Activated T-helper 2 cell treated with anti-CD3 and anti-CD28 coated beads, Interferon-gamma antibody, Interleukin-2, Interleukin-4, amounts not matched to agents 10 μg/mL and 5 μg/mL and 100 μg/mL, durations not matched to agents 14 hours and 24 hours and 36 hours (primary cell): ENCODE measurements at regions of chr14 and their contacts with region 1.

Region 1: GRCh38 chr14:65206448-65207096 is 104.3 kb upstream of the MAX start:
- DNase-seq: no peak
- H3K4me3 Mint-ChIP-seq: peak overlapping the region; percentile 64
- H3K27ac Mint-ChIP-seq: peak overlapping the region; percentile 91
- H3K4me1 Mint-ChIP-seq: peaks cover 61% of the 10 kb centered on the region
- H3K27me3 Mint-ChIP-seq: no peaks in the 10 kb centered on the region

Region 2: DNA sequence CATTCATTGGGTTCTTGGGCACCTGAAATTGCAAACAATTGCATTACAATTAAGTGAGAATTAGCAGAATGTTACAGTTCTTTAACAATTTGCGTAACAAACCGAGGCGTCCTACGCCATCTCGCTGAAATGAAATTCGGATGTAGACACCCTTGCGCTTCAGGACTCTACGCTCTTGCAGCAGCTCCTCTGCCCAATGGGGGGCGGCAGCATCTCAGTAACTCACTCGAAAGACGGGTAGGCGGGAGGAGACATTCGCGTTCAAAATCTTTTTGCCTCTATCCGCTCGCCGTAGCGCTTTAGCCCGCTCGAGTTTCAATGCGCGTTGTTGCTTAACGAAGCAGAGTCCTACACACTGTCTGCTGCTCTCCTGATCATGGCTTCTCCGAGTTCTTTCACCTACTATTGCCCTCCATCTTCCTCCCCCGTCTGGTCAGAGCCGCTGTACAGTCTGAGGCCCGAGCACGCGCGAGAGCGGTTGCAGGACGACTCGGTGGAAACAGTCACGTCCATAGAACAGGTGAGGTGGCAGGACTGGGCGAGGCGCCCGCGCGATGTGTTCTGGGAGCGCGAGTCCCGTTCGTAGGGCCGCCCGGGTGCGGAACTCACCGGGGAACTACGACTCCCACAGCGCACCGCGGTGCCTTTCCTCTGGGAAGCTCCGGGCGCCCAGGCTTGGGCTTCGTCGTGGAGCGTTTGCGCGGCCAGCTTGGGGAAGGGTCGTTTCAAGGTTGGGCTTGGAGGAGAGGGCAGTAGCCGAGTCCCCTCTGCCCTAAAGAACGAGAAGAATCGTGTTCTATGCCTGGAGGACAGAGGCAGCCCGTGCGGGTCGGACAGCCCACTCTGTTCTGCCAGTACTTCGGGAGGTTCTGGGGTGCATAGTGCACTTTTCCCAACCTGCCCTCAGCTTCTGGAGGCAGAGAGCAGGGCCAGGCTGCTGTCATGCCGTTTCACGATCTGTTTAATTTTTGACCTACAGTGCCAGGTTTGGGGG is 219.7 kb before region 1 on chr14 and contains the start of gene FNTB:
- intact Hi-C with region 1: loop called (anchors 5 kb)
- DNase-seq: peak; percentile 90
- H3K4me3 Mint-ChIP-seq: peak within 1 kb of the TSS; percentile 93
- H3K27ac Mint-ChIP-seq: peak within 1 kb of the TSS; percentile 96
- H3K4me1 Mint-ChIP-seq: peaks cover 43% of the 10 kb centered on the region
- H3K27me3 Mint-ChIP-seq: peaks cover 20% of the 10 kb centered on the region
- total RNA-seq, gene FNTB: 14.8 and 17.5 TPM in 2 replicates

Region 3: DNA sequence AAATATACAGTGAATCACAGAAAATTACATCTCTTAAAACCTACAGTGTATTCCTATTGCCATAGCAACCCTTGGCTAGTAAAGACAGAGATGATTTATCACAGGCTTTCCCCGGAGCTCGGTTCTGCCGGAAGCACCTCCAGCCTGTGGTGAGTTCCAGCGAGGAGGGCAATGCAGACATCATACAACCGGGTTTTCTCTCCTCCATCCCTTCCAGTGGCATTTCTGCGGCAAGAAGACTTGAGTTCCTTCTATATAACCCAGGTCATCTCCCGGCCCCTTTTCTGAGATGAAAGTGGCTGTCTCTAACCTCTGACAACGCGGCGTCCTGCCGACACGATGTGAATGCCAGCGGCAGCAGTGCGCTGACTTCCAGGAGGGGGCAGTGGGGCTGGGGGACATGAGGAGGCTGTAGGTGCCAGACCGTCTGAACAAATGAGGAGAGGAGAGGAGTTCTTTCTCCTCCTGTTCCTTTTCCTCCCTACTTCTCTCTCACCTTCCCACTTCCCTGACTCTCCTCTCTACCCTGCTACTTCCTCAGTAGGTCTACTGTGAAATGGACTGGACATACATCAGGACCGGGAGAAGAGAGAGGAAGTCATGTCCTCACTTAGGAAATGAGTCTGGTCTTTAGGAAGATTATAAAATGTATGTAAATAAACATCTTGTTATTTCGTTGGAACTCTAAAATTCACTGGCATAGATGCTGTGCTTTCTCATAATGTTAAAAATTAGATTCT is 35.6 kb before region 1 on chr14:
- intact Hi-C with region 1: loop called (anchors 1 kb)
- DNase-seq: peak; percentile 53
- H3K4me3 Mint-ChIP-seq: peak overlapping the region; percentile 59
- H3K27ac Mint-ChIP-seq: peak overlapping the region; percentile 75
- H3K4me1 Mint-ChIP-seq: peaks cover 33% of the 10 kb centered on the region
- H3K27me3 Mint-ChIP-seq: peaks cover 2% of the 10 kb centered on the region

Region 4: DNA sequence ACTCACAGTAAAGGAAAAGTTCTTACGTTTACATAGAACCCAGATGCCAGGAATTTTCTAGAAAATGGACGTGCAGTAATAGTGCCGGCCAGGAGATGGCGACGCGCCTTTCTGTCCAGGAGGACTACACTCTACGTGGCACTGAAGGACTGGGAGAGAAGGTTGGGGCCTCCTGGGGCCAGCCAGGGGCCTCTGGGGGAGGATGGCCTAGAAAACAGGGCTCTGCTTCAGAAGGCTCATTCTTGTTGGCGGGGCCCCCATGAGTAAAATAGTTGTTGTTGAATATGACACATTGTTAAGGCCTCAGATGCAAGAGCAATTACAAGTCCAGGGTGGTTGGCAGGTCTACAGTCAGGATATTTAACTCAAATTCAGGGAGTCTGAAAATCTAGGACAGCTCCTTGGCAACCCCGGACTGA is 15.9 kb after region 1 on chr14:
- intact Hi-C with region 1: loop called (anchors 1 kb)
- DNase-seq: peak; percentile 35
- H3K4me3 Mint-ChIP-seq: no peak overlapping the region
- H3K27ac Mint-ChIP-seq: peak overlapping the region; percentile 24
- H3K4me1 Mint-ChIP-seq: peaks cover 34% of the 10 kb centered on the region
- H3K27me3 Mint-ChIP-seq: no peaks in the 10 kb centered on the region

Region 5: GRCh38 chr14:65302571-65303189 is 96.1 kb after region 1 on chr14:
- intact Hi-C with region 1: loop called (anchors 2 kb)
- DNase-seq: peak; percentile 24
- H3K4me3 Mint-ChIP-seq: peak overlapping the region; percentile 53
- H3K27ac Mint-ChIP-seq: peak overlapping the region; percentile 94
- H3K4me1 Mint-ChIP-seq: peaks cover 63% of the 10 kb centered on the region
- H3K27me3 Mint-ChIP-seq: no peaks in the 10 kb centered on the region

Region 6: DNA sequence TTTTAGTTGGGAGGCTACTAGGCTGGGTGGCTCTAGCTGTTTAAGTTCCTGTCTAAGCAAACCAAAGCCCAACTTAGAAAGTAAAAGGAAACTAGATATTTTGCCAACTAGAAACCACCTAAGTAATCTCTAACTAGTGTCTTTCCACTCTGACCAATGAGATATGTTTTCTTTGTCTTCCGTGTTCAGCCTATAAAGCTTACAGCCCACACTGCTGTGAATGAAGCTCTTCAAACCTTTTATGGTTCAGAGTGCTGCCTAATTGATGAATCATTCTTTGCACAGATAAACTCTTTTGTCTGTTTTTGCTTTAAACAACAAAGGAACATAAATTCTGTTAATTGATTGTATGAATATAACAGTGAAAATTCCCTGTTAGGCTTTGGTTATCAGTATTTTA is 272.0 kb after region 1 on chr14:
- intact Hi-C with region 1: loop called (anchors 1 kb)
- DNase-seq: no peak
- H3K4me3 Mint-ChIP-seq: no peak overlapping the region
- H3K27ac Mint-ChIP-seq: peak overlapping the region; percentile 19
- H3K4me1 Mint-ChIP-seq: peaks cover 73% of the 10 kb centered on the region
- H3K27me3 Mint-ChIP-seq: no peaks in the 10 kb centered on the region

Region 7: GRCh38 chr14:65847075-65847847 is 640.7 kb after region 1 on chr14:
- intact Hi-C with region 1: loop called (anchors 1 kb)
- DNase-seq: peak; percentile 79
- H3K4me3 Mint-ChIP-seq: peak overlapping the region; percentile 22
- H3K27ac Mint-ChIP-seq: peak overlapping the region; percentile 80
- H3K4me1 Mint-ChIP-seq: peaks cover 66% of the 10 kb centered on the region
- H3K27me3 Mint-ChIP-seq: no peaks in the 10 kb centered on the region